ENCODE measurements at regions of chr11 and their contacts with region 1.

Region 1: DNA sequence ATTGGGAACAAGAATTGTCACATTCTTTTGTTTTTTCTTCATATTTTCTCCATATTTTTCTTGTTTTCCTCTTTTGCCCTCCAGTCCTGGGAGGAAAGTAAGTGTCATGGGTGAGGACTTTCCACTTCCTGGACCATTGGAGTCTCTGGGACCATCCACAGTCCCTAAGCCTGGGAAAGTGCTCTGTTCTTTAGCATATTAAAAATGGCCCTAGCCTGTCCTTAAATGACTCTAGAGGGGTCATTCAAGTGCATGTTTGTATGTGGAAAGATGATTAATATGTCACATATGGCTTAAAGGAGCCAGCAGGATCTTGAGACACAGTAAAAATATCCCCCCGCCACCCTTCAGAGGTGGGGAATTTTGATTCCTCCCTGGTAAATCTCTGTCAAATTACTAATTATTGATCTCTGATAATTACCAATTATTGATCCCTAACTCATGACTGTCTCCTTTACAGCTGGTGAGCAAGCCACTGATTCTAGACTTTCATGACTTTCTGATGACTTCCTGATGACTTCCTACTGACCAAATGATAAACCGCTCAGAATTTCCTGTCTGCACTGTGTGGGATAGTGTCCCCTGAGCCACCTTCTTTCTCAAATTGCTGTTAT is 20.0 kb upstream of the SCGB1D1 start:
- DNase-seq: no peak
- ATAC-seq: no peak
- H3K4me3 ChIP-seq: no peak overlapping the region
- H3K4me1 ChIP-seq: no peaks in the 10 kb centered on the region
- CTCF ChIP-seq: no peak

Region 2: DNA sequence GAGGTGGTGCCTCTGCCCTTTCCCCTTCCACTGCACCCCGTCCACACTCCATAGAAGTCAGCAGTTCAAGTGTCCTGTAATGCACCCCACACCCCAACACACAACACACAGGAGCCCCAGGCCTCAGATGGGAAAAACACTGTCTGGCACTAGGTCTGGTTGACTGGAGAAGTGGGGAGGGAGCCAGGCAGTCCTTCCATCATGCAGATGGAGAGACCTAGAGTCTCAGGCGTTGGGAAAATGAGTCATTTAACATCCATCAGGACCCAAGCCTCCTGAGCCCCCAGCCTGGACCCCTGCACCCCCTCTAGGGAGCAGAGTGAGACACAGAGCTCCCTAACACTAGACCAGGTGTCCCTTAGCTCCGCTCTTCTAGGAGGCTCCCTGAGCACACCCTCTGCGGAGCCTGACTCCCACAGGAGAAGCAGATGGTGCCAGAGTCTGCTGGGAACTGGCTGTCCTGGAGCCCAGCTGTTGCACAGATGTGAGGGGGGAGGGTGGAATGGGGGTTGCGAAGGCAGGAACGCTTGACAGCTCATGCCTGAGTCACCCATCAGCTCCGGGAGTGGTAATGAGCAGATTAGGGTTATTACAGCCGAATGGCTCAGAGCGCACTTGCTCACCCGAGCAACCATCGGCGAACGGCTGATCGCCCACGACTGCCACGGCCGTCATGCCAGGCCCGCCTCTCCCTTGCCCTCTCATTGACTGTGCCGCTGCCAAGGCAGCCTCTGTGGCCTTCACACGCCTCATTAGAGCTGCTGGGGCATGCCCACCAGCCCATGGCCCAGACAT is 567.1 kb before region 1 on chr11:
- intact Hi-C with region 1: no loop called
- DNase-seq: peak; percentile 68 to 80 (median 71)
- ATAC-seq: peak; percentile 74
- H3K4me3 ChIP-seq: no peak overlapping the region
- H3K4me1 ChIP-seq: peaks cover 4% of the 10 kb centered on the region
- CTCF ChIP-seq: no peak

Region 3: DNA sequence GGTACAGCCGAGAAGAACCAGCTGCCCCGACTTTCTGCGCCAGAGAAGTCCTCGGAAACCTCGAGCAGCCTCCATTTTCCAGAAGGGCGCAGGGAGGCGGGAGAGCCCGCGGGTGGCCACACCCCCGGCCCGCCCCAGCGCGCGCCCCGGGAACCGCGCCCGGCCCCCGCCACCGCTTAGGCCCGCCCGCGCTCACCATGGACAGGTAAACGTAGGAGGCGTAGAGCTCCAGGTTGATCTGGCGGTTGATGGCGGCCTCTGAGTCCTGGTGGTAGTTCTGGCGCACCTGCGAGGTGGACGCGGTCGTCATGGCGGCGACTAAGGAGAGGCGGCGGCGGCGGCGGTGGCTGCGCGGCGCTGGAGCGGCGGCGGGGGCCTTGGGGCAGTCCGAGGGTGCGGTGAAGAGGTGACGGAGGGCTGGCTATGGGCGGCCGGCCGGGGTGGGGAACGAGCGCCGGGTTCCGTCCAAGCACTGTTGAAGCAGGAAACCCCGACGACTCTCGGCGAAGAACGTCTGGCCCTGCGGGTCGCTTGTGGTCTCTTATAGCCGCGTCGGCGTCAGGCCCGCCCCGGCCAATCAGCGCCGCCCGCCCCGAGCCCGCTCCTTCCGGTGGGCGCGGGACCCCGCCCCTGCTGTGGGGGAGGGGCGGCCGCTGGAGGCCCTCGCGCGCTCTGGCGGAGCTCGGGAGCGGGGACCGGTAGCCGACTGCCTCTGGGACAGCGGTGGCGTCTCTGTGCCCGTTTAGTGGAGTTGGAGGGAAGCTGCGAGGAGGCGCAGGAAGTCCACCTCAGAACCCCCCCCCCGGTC is 202.7 kb before region 1 on chr11 and contains the start of gene FTH1:
- intact Hi-C with region 1: no loop called
- DNase-seq: peak; percentile 95 to 96 (median 96)
- ATAC-seq: peak; percentile 83
- H3K4me3 ChIP-seq: peak within 1 kb of the TSS; percentile 75
- H3K4me1 ChIP-seq: peaks cover 44% of the 10 kb centered on the region
- CTCF ChIP-seq: no peak
- total RNA-seq, gene FTH1: 3,081 to 6,795 (median 5,370) TPM

Region 4: DNA sequence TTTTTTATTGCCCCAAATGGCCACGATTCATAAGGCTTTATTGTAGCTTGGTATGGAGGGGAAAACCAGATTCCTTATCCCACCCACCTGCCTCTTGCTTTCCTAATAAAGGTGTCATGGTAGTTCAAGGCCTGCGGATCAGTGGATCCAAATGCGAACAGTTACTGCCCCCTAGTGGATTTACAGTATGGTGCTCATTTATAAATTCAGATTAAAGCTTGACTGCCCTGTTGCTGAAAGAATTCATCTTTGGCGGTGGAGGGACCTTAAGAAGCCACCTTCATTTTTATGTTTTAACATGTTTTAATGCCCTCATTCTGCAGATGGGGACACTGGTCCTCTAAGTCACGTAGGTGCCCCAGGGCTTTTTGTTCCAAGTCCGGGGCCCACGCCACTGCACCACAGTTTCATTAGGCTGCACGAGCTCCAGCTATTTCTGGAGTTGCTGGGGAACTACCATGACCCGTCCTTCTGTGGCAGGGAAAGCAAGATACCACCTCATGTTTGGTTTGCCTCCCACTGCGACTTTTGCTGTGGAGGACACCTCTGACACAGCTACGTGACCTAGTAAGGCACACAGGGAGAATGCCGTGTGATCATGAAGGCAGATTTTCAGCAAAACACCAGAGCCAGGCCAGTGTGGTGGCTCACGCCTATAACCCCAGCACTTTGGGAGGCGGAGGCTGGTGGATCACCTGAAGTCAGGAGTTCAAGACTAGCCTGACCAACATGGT is 61.9 kb before region 1 on chr11:
- intact Hi-C with region 1: no loop called
- DNase-seq: peak in 1 of 3 donors; percentile 54
- ATAC-seq: peak; percentile 71
- H3K4me3 ChIP-seq: no peak overlapping the region
- H3K4me1 ChIP-seq: peaks cover 4% of the 10 kb centered on the region
- CTCF ChIP-seq: peak; percentile 59

Region 5: DNA sequence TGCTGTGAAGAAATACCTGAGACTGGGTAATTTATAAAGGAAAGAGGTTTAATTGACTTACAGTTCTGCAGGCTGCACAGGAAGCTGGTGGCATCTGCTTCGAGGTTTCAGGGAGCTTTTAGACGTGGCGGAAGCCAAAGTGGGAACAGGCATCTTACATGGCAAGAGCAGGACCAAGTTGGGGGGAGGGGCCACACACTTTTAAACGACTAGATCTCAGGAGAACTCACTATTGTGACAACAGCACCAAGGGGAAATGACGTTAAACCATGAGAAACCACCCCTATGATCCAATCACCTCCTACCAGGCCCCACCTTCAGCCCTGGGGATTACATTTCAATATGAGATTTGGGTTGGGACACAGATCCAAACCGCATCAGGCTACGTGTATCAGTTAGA is 139.9 kb after region 1 on chr11:
- intact Hi-C with region 1: loop called in 1 of 2 experiments (anchors 5 kb)
- DNase-seq: no peak
- ATAC-seq: no peak
- H3K4me3 ChIP-seq: no peak overlapping the region
- H3K4me1 ChIP-seq: no peaks in the 10 kb centered on the region
- CTCF ChIP-seq: no peak

Measured in mucosa of descending colon (tissue), 3 donors.